Right cardiac atrium (tissue), 5 donors: ENCODE measurements at regions of chr11 and their contacts with region 1.

Region 1: GRCh38 chr11:10864688-10865087 is 6.8 kb upstream of the ZBED5 start:
- DNase-seq: no peak
- ATAC-seq: peak; percentile 55 to 65
- H3K4me3 ChIP-seq: peak overlapping the region; percentile 5
- H3K27ac ChIP-seq: no peak overlapping the region
- H3K4me1 ChIP-seq: no peaks in the 10 kb centered on the region
- H3K27me3 ChIP-seq: no peaks in the 10 kb centered on the region

Region 2: GRCh38 chr11:10899121-10899830 is 34.6 kb after region 1 on chr11:
- intact Hi-C with region 1: loop called in 1 of 4 experiments (anchors 5 kb)
- DNase-seq: peak; percentile 73 to 82 (median 78)
- ATAC-seq: peak; percentile 65 to 82
- H3K4me3 ChIP-seq: no peak overlapping the region
- H3K27ac ChIP-seq: peak overlapping the region; percentile 62
- H3K4me1 ChIP-seq: peaks cover 22% of the 10 kb centered on the region
- H3K27me3 ChIP-seq: no peaks in the 10 kb centered on the region